Panc1 (cell line): ENCODE measurements at regions of chr4 and their contacts with region 1.

Region 1: GRCh38 chr4:75849461-75849860 is 52.8 kb downstream of the PPEF2 start:
- DNase-seq: no peak
- ATAC-seq: no peak
- H3K4me3 ChIP-seq: no peak overlapping the region
- H3K27ac ChIP-seq: no peak overlapping the region
- H3K4me1 ChIP-seq: no peaks in the 10 kb centered on the region
- H3K27me3 ChIP-seq: no peaks in the 10 kb centered on the region; the same call in 1 of the 2 replicates
- CTCF ChIP-seq: no peak

Region 2: GRCh38 chr4:75727073-75727472 is 122.4 kb before region 1 on chr4:
- CTCF ChIA-PET with region 1: no interaction called
- POLR2A ChIA-PET with region 1: interaction called, 13 read pairs
- in situ Hi-C with region 1: no loop called
- intact Hi-C with region 1: no loop called
- DNase-seq: no peak
- ATAC-seq: no peak
- H3K4me3 ChIP-seq: no peak overlapping the region
- H3K27ac ChIP-seq: no peak overlapping the region
- H3K4me1 ChIP-seq: peaks cover 16% of the 10 kb centered on the region
- H3K27me3 ChIP-seq: no peaks in the 10 kb centered on the region
- CTCF ChIP-seq: no peak

Region 3: GRCh38 chr4:75800972-75801371 is 48.5 kb before region 1 on chr4:
- CTCF ChIA-PET with region 1: no interaction called
- POLR2A ChIA-PET with region 1: no interaction called
- in situ Hi-C with region 1: no loop called
- intact Hi-C with region 1: no loop called
- DNase-seq: no peak
- ATAC-seq: no peak
- H3K4me3 ChIP-seq: no peak overlapping the region
- H3K27ac ChIP-seq: no peak overlapping the region
- H3K4me1 ChIP-seq: no peaks in the 10 kb centered on the region
- H3K27me3 ChIP-seq: no peaks in the 10 kb centered on the region
- CTCF ChIP-seq: no peak